Activated CD4-positive, alpha-beta T cell treated with anti-CD3 and anti-CD28 coated beads for 36 hours (primary cell): ENCODE measurements at regions of chr16 and their contacts with region 1.

Region 1: DNA sequence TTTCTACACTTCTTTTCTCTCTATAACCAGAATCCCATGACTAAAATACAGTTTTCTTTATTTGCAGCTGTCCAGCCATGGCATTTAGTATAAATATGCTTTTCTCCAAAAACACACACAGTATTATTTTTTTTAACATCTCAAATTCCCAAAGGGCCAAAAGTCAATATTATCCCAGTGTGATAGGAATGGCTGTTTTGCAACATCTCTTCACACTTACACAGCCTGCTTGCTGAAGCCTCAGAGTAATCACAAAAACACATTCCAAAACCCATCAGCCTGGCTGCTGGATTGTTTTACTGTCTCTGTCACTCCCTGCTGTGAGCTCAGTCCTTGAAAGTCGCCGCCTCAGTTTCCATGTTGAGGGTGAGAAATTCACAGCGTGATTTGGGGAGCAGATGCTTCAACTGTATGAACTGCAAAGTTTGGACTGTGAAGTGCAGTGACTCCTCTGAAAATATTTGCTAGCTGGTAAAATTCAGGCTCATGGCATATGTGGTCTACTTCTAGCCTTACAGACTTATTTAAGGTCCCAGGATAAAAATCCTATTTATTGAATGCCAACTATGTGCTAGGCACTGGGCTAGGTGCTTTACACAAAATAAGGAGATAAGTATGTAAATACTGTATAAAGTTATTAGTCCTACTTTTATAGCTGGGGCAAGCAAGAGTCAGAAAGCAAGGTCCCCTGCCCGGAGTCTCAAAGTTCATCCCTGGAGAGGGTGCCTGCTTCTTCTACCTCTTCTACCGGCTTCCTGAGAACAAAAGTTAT is 116.5 kb downstream of the SOCS1 start:
- DNase-seq: no peak
- ATAC-seq: no peak
- H3K4me3 Mint-ChIP-seq: peak overlapping the region; percentile 14
- H3K27ac Mint-ChIP-seq: peak overlapping the region; percentile 84
- H3K4me1 Mint-ChIP-seq: peaks cover 48% of the 10 kb centered on the region
- H3K27me3 Mint-ChIP-seq: no peaks in the 10 kb centered on the region

Region 2: GRCh38 chr16:9176547-9177418 is 1962.7 kb before region 1 on chr16:
- CTCF ChIA-PET with region 1: no interaction called
- POLR2A ChIA-PET with region 1: no interaction called
- intact Hi-C with region 1: no loop called
- DNase-seq: no peak
- ATAC-seq: no peak
- H3K4me3 Mint-ChIP-seq: no peak overlapping the region
- H3K27ac Mint-ChIP-seq: no peak overlapping the region
- H3K4me1 Mint-ChIP-seq: no peaks in the 10 kb centered on the region
- H3K27me3 Mint-ChIP-seq: peaks cover 9% of the 10 kb centered on the region

Region 3: DNA sequence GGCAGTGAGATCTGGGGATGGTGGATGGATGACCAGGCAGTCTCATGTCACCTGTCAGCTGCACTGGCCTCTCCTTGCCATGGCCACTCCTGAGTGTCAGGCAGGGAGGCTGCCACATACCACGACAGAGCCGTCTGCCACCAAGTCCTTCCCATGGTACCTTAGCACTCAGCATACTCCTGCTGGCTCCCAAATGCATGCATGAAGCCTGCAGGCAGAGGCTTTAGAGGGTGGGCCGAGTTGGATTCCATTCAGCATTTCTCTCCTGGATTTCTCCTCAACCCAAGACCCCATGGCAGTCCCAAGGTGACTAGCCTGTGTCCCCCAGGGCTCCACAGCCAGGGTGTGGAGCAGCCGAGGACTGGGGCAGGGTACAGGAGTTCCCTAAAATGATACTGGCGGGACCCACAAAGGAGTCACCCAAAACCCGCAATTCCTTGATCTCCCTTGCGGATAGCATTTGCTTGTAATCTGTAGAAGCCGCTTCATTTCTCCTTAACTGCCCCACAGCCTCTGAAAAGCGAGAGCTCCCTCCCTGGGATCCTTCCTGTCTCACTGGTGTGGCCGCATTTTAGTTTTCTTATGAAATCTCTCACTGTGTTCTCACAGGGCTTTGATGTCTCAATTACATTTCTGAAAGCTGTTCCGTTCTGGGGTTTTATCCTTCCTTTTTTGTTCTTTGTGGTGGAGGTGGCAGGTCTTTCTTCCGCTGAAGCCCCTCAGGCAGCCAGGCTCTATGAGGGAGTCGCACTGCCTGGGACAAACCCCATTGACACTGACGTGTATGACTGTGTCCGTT is 24.9 kb before region 1 on chr16:
- CTCF ChIA-PET with region 1: interaction called, 4 read pairs
- POLR2A ChIA-PET with region 1: no interaction called
- intact Hi-C with region 1: loop called in 1 of 2 experiments (anchors 2 kb)
- DNase-seq: peak; percentile 59
- ATAC-seq: peak; percentile 80
- H3K4me3 Mint-ChIP-seq: peak overlapping the region; percentile 44
- H3K27ac Mint-ChIP-seq: peak overlapping the region; percentile 85
- H3K4me1 Mint-ChIP-seq: peaks cover 57% of the 10 kb centered on the region
- H3K27me3 Mint-ChIP-seq: no peaks in the 10 kb centered on the region